Adrenal gland (tissue), 19 donors: ENCODE measurements at regions of chr17 and their contacts with region 1.

Region 1: GRCh38 chr17:59311130-59311920 is 20.1 kb upstream of the YPEL2 start:
- DNase-seq: peak; percentile 22 to 64 (median 41)
- H3K4me3 ChIP-seq: no peak overlapping the region
- H3K27ac ChIP-seq: no peak overlapping the region
- H3K4me1 ChIP-seq: no peaks in the 10 kb centered on the region
- H3K27me3 ChIP-seq: no peaks in the 10 kb centered on the region
- CTCF ChIP-seq: peak; percentile 64 to 93 (median 89)
- POLR2A ChIP-seq: no peak

Region 2: DNA sequence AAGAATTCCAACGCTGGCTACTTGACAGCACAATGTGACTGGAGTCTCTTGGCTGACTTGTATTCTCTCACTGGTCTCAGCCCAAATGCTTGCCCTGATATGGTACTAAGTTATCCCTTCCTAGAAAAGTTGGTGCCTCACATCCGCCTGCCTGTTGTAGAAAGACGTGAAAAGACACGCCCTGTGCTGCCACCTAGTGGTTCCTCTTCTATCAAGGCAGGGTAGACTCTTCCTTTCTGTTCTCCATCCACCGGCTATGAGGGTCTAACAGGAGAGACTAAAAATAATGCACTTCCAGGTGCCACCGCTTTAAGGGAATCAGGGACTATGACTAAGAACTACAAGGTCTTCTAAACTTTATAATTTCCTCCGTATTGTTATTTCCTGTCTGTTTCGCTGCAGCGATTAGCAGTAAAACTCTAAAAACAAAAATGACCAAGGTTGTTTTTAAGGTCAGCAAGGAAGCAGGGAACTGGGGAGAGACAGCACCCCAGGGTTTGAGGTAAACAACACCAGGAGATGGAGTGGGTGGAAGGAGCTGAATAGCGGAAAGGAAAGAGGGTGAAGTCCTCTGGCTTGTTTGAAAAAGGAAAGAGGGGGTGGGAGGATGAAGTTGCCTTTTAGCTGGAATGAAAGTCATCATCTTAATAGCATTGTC is 129.6 kb after region 1 on chr17:
- intact Hi-C with region 1: loop called in 1 of 2 experiments (anchors 5 kb)
- DNase-seq: peak; percentile 89 to 98 (median 93)
- H3K4me3 ChIP-seq: peak overlapping the region in 1 of 4 donors; percentile 3
- H3K27ac ChIP-seq: peak overlapping the region in 2 of 5 donors; percentile 24 to 60
- H3K4me1 ChIP-seq: peaks cover 6 to 7% of the 10 kb centered on the region in 2 donors
- H3K27me3 ChIP-seq: no peaks in the 10 kb centered on the region
- CTCF ChIP-seq: peak; percentile 65 to 93 (median 90)
- POLR2A ChIP-seq: no peak

Region 3: GRCh38 chr17:59558977-59559376 is 247.7 kb after region 1 on chr17:
- intact Hi-C with region 1: loop called in 1 of 2 experiments (anchors 5 kb)
- DNase-seq: no peak
- H3K4me3 ChIP-seq: no peak overlapping the region
- H3K27ac ChIP-seq: no peak overlapping the region
- H3K4me1 ChIP-seq: no peaks in the 10 kb centered on the region
- H3K27me3 ChIP-seq: no peaks in the 10 kb centered on the region
- CTCF ChIP-seq: peak in 5 of 6 experiments; percentile 18 to 59 (median 49)
- POLR2A ChIP-seq: no peak